ENCODE measurements at regions of chr13 and their contacts with region 1.

Region 1: DNA sequence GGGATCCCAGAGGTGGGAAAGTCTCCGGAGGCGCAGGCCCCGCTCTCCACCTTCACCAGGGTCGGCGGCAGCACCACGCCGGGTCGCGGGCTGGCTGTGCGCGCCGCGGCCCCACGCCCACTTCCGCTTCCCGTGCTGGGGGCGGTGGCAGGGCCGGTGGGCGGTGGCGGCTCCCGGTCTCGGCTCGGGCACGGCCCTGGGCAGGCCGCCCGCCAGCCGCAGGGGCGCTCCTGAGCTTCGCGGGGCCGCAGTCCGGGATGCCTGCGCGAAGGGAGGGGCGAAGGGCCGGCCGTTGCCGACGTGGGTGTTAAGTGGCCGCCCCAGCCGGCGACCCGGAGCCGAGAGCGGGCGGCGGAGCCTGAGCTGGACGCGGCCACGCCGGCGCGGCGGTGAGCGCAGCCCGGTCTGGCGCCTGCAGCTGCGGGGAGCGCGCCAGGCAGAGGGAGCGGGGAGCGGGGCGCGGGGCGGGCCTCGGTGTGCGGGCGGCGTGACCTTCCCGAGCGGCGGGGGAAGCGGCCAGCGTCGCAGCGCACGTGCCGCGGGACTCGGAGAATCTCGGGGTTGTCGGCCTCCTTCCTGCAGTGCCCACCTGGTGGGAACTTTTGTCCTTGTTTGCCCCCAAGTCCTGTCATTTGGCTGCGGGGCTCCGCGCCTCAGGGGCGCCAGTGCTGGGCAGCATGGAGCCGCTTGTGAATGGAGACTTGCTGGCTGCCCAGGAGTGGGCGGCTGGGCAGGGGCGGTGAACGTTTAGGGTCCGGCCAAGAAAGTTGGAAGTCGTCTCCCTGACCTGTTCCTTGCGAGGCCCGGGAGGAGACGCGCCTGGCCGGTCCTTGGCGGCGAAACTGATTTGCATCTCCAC is at the start of gene SLC25A15:
- DNase-seq: peak; percentile 88
- H3K4me3 ChIP-seq: peak within 1 kb of the TSS; percentile 52 to 78 (median 65)
- H3K27ac ChIP-seq: peak within 1 kb of the TSS; percentile 87 to 92 (median 88)
- H3K4me1 ChIP-seq: peaks cover 5 to 13% (median 10%) of the 10 kb centered on the region in 4 donors
- H3K27me3 ChIP-seq: no peaks in the 10 kb centered on the region
- CTCF ChIP-seq: peak in 2 of 5 experiments; percentile 20 to 42
- EP300 ChIP-seq: no peak
- POLR2A ChIP-seq: peak; percentile 37
- total RNA-seq, gene SLC25A15: 3.0 to 30.6 (median 10.1) TPM

Region 2: GRCh38 chr13:40749327-40749726 is 40.2 kb before region 1 on chr13:
- in situ Hi-C with region 1: no loop called
- intact Hi-C with region 1: no loop called
- DNase-seq: no peak
- H3K4me3 ChIP-seq: no peak overlapping the region
- H3K27ac ChIP-seq: no peak overlapping the region
- H3K4me1 ChIP-seq: no peaks in the 10 kb centered on the region
- H3K27me3 ChIP-seq: no peaks in the 10 kb centered on the region
- CTCF ChIP-seq: peak in 1 of 5 experiments; percentile 3
- EP300 ChIP-seq: no peak
- POLR2A ChIP-seq: no peak

Region 3: DNA sequence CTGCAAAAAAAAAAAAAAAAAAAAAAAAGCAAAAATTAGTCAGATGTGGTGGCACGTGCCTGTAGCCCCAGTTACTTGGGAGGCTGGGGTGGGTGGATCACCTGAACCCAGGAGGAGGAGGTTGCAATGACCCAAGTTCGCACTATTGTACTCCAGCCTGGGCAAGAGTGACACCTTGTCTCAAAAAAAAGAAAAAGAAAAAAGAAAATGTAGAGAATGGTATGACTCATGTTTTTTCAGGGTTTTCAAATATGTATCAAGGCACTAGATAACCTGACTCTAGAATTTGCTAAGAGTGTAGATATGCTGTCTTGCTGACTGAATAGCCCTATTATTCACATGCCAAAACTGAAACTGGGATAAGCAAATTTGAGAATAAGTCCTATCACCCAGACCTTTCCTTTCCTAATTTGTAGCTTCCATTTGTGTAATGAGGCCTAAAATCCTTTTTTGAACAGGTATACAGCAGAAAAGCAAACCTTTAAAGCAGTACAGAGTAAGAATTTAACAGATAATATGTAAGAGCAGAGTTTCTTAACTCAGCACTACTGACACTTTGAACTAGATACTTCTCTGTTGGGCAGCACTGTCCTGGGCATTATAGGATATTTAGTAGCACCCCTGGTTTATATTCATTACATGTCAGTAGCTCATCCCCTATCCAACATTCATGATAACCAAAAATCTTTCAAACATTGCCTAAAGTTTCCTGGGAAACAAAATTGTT is 121.0 kb after region 1 on chr13:
- in situ Hi-C with region 1: loop called in 1 of 4 experiments (anchors 10 kb)
- intact Hi-C with region 1: no loop called
- DNase-seq: no peak
- H3K4me3 ChIP-seq: no peak overlapping the region
- H3K27ac ChIP-seq: no peak overlapping the region
- H3K4me1 ChIP-seq: peaks cover 0 to 15% (median 2%) of the 10 kb centered on the region in 4 donors
- H3K27me3 ChIP-seq: no peaks in the 10 kb centered on the region
- CTCF ChIP-seq: no peak
- EP300 ChIP-seq: no peak
- POLR2A ChIP-seq: no peak

Region 4: GRCh38 chr13:40974460-40975407 is 185.2 kb after region 1 on chr13:
- in situ Hi-C with region 1: loop called in 1 of 4 experiments (anchors 25 kb)
- intact Hi-C with region 1: no loop called
- DNase-seq: peak; percentile 20
- H3K4me3 ChIP-seq: peak overlapping the region in 1 of 4 donors; percentile 27
- H3K27ac ChIP-seq: peak overlapping the region; percentile 71 to 82 (median 78)
- H3K4me1 ChIP-seq: peaks cover 42 to 89% (median 64%) of the 10 kb centered on the region in 4 donors
- H3K27me3 ChIP-seq: no peaks in the 10 kb centered on the region
- CTCF ChIP-seq: peak in 4 of 5 experiments; percentile 34 to 53 (median 46)
- EP300 ChIP-seq: no peak
- POLR2A ChIP-seq: no peak

Region 5: GRCh38 chr13:41061075-41061913 is 271.8 kb after region 1 on chr13 and contains the start of gene WBP4:
- in situ Hi-C with region 1: loop called in 1 of 4 experiments (anchors 25 kb)
- intact Hi-C with region 1: no loop called
- DNase-seq: peak; percentile 95
- H3K4me3 ChIP-seq: peak within 1 kb of the TSS; percentile 62 to 91 (median 86)
- H3K27ac ChIP-seq: peak within 1 kb of the TSS; percentile 96 to 100 (median 99)
- H3K4me1 ChIP-seq: peaks cover 46 to 72% (median 65%) of the 10 kb centered on the region in 4 donors
- H3K27me3 ChIP-seq: no peaks in the 10 kb centered on the region
- CTCF ChIP-seq: peak in 2 of 5 experiments; percentile 13 to 35
- EP300 ChIP-seq: peak; percentile 49
- POLR2A ChIP-seq: peak; percentile 88
- total RNA-seq, gene WBP4: 3.4 to 10.3 (median 8.3) TPM

Region 6: GRCh38 chr13:41231786-41232185 is 442.3 kb after region 1 on chr13:
- in situ Hi-C with region 1: loop called in 1 of 4 experiments (anchors 25 kb)
- intact Hi-C with region 1: no loop called
- DNase-seq: peak; percentile 64
- H3K4me3 ChIP-seq: no peak overlapping the region
- H3K27ac ChIP-seq: peak overlapping the region in 3 of 4 donors; percentile 56 to 67 (median 59)
- H3K4me1 ChIP-seq: peaks cover 0 to 11% (median 0%) of the 10 kb centered on the region in 4 donors
- H3K27me3 ChIP-seq: no peaks in the 10 kb centered on the region
- CTCF ChIP-seq: no peak
- EP300 ChIP-seq: no peak
- POLR2A ChIP-seq: no peak

Region 7: GRCh38 chr13:42011691-42012391 is 1222.3 kb after region 1 on chr13:
- in situ Hi-C with region 1: no loop called
- intact Hi-C with region 1: no loop called
- DNase-seq: no peak
- H3K4me3 ChIP-seq: no peak overlapping the region
- H3K27ac ChIP-seq: no peak overlapping the region
- H3K4me1 ChIP-seq: peaks cover 0 to 6% (median 0%) of the 10 kb centered on the region in 4 donors
- H3K27me3 ChIP-seq: no peaks in the 10 kb centered on the region
- CTCF ChIP-seq: no peak
- EP300 ChIP-seq: no peak
- POLR2A ChIP-seq: no peak

Measured in transverse colon (tissue), 4 donors.